ENCODE measurements at regions of chr17 and their contacts with region 1.

Region 1: GRCh38 chr17:41972571-41973411 is 6.2 kb downstream of the CNP start:
- DNase-seq: no peak
- ATAC-seq: peak in 2 of 4 experiments; percentile 11 to 15
- H3K4me3 ChIP-seq: no peak overlapping the region
- H3K4me3 Mint-ChIP-seq: no peak overlapping the region
- H3K27ac ChIP-seq: no peak overlapping the region
- H3K27ac Mint-ChIP-seq: peak overlapping the region in 1 of 2 donors; percentile 10
- H3K4me1 ChIP-seq: peaks cover 0 to 22% of the 10 kb centered on the region in 2 experiments
- H3K4me1 Mint-ChIP-seq: peaks cover 33 to 40% (median 36%) of the 10 kb centered on the region in 3 donors
- H3K27me3 ChIP-seq: no peaks in the 10 kb centered on the region
- H3K27me3 Mint-ChIP-seq: no peaks in the 10 kb centered on the region

Region 2: GRCh38 chr17:42050393-42051012 is 77.7 kb after region 1 on chr17 and contains the start of gene C17orf113:
- CTCF ChIA-PET with region 1: no interaction called
- POLR2A ChIA-PET with region 1: interaction called in 1 of 2 experiments, 13 read pairs
- DNase-seq: peak in 31 of 35 experiments; percentile 9 to 60 (median 36)
- ATAC-seq: peak; percentile 78 to 84 (median 79)
- H3K4me3 ChIP-seq: peak within 1 kb of the TSS; percentile 20 to 45
- H3K4me3 Mint-ChIP-seq: peak within 1 kb of the TSS; percentile 71 to 80 (median 72)
- H3K27ac ChIP-seq: no peak within 1 kb of the TSS
- H3K27ac Mint-ChIP-seq: peak within 1 kb of the TSS in 1 of 2 donors; percentile 74
- H3K4me1 ChIP-seq: peaks cover 0 to 15% of the 10 kb centered on the region in 2 experiments
- H3K4me1 Mint-ChIP-seq: peaks cover 6 to 15% (median 9%) of the 10 kb centered on the region in 3 donors
- H3K27me3 ChIP-seq: peaks cover 0 to 50% of the 10 kb centered on the region in 2 experiments
- H3K27me3 Mint-ChIP-seq: peaks cover 23 to 42% of the 10 kb centered on the region in 2 donors
- total RNA-seq, gene C17orf113: 0.35 to 1.1 (median 0.89) TPM

Region 3: GRCh38 chr17:42917236-42917603 is 944.4 kb after region 1 on chr17:
- CTCF ChIA-PET with region 1: no interaction called
- POLR2A ChIA-PET with region 1: interaction called in 1 of 2 experiments, 10 read pairs
- DNase-seq: no peak
- ATAC-seq: no peak
- H3K4me3 ChIP-seq: no peak overlapping the region
- H3K4me3 Mint-ChIP-seq: no peak overlapping the region
- H3K27ac ChIP-seq: no peak overlapping the region
- H3K27ac Mint-ChIP-seq: no peak overlapping the region
- H3K4me1 ChIP-seq: no peaks in the 10 kb centered on the region
- H3K4me1 Mint-ChIP-seq: peaks cover 0 to 6% (median 0%) of the 10 kb centered on the region in 3 donors
- H3K27me3 ChIP-seq: peaks cover 0 to 9% of the 10 kb centered on the region in 2 experiments
- H3K27me3 Mint-ChIP-seq: peaks cover 4 to 17% of the 10 kb centered on the region in 2 donors

Measured in T-cell (primary cell).